ENCODE measurements at regions of chr6 and their contacts with region 1.

Region 1: DNA sequence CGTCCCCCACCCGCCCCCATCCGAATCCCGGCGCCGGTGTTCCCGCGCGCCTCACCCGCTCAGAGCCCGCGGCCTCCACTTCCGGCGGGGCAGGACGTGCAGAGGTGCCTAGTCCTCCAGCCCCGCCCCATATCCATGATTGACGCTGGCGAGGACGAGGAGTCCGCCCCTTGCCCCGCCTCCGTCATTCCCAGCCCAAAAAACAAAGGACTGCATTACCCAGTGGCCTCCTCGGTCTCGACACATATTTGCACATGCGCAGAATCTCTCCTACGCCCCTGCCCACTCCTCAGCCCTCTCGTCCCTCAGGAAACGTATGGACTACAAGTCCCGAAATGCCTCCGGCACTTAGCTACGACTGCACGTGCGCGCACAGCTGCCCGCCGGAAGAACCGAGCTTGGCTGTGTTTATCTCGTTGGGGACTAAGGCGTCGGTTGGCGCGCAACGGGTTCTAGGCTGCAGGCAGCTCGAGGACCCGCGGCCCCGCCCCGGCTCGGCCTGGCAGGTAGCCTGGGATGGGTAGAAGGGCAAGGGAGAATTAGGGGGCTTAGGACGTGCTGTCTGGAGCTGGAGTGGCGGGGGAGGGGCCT is at the starts of genes KLHDC3 and MEA1:
- DNase-seq: peak; percentile 99
- ATAC-seq: peak; percentile 96
- H3K4me3 Mint-ChIP-seq: peak within 1 kb of the TSS; percentile 91
- H3K27ac Mint-ChIP-seq: peak within 1 kb of the TSS; percentile 87
- H3K4me1 Mint-ChIP-seq: peaks cover 39% of the 10 kb centered on the region
- H3K27me3 Mint-ChIP-seq: no peaks in the 10 kb centered on the region
- total RNA-seq, gene KLHDC3: 58.3 to 65.2 TPM
- total RNA-seq, gene MEA1: 93.4 to 129 TPM

Region 2: GRCh38 chr6:42217519-42218367 is 796.2 kb before region 1 on chr6 and contains the start of gene MRPS10:
- CTCF ChIA-PET with region 1: no interaction called
- POLR2A ChIA-PET with region 1: no interaction called
- intact Hi-C with region 1: loop called in 1 of 2 experiments (anchors 2 kb)
- DNase-seq: peak; percentile 95
- ATAC-seq: peak; percentile 99
- H3K4me3 Mint-ChIP-seq: peak within 1 kb of the TSS; percentile 100
- H3K27ac Mint-ChIP-seq: peak within 1 kb of the TSS; percentile 95
- H3K4me1 Mint-ChIP-seq: peaks cover 32% of the 10 kb centered on the region
- H3K27me3 Mint-ChIP-seq: no peaks in the 10 kb centered on the region
- total RNA-seq, gene MRPS10: 35.2 to 36.2 TPM

Region 3: DNA sequence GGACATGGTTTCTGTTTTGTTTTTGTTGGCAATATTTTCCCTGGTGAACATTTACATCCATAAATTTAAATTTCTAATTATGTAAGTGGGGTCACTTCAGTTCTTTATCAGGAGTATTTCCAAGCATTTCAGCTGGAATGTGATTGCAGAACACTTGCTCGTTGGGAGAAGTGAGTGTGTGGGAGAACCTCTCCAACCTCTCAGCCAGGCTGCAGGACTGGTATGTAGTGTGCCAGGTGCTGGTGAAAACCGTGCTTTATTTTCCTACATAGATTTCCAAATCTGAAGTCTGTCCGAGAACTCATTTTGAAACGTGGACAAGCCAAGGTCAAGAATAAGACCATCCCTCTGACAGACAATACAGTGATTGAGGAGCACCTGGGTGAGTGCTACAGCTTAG is 128.2 kb before region 1 on chr6:
- CTCF ChIA-PET with region 1: no interaction called
- POLR2A ChIA-PET with region 1: no interaction called
- intact Hi-C with region 1: no loop called
- DNase-seq: no peak
- ATAC-seq: no peak
- H3K4me3 Mint-ChIP-seq: no peak overlapping the region
- H3K27ac Mint-ChIP-seq: peak overlapping the region; percentile 56
- H3K4me1 Mint-ChIP-seq: peaks cover 44% of the 10 kb centered on the region
- H3K27me3 Mint-ChIP-seq: no peaks in the 10 kb centered on the region

Region 4: GRCh38 chr6:42978839-42979522 is 35.0 kb before region 1 on chr6 and contains the start of gene PEX6:
- CTCF ChIA-PET with region 1: interaction called, 4 read pairs
- POLR2A ChIA-PET with region 1: interaction called, 10 read pairs
- intact Hi-C with region 1: loop called (anchors 1 kb)
- DNase-seq: peak; percentile 98
- ATAC-seq: peak; percentile 95
- H3K4me3 Mint-ChIP-seq: peak within 1 kb of the TSS; percentile 89
- H3K27ac Mint-ChIP-seq: peak within 1 kb of the TSS; percentile 95
- H3K4me1 Mint-ChIP-seq: peaks cover 45% of the 10 kb centered on the region
- H3K27me3 Mint-ChIP-seq: no peaks in the 10 kb centered on the region
- total RNA-seq, gene PEX6: 10.7 to 14.6 TPM

Region 5: DNA sequence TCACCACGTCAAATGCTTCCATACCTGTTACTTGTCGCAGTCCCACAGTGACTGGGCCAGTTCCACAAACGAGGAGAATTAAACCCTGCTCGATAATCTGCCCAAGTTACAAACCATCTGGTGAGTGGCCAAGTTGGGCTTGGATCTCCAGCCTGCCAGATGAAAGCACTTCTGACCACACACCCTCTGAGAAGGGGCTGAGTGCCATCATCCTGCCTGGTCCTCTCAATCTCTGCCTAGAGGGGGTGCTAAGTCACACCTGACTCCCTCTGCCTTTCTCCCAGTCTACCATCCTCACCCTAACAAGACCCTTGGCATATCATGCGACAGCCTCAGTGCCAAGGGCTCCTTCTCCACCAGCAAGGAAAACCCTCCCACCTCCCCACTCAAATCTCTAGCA is 23.3 kb after region 1 on chr6:
- CTCF ChIA-PET with region 1: no interaction called
- POLR2A ChIA-PET with region 1: no interaction called
- intact Hi-C with region 1: no loop called
- DNase-seq: no peak
- ATAC-seq: no peak
- H3K4me3 Mint-ChIP-seq: no peak overlapping the region
- H3K27ac Mint-ChIP-seq: no peak overlapping the region
- H3K4me1 Mint-ChIP-seq: peaks cover 3% of the 10 kb centered on the region
- H3K27me3 Mint-ChIP-seq: no peaks in the 10 kb centered on the region

Region 6: DNA sequence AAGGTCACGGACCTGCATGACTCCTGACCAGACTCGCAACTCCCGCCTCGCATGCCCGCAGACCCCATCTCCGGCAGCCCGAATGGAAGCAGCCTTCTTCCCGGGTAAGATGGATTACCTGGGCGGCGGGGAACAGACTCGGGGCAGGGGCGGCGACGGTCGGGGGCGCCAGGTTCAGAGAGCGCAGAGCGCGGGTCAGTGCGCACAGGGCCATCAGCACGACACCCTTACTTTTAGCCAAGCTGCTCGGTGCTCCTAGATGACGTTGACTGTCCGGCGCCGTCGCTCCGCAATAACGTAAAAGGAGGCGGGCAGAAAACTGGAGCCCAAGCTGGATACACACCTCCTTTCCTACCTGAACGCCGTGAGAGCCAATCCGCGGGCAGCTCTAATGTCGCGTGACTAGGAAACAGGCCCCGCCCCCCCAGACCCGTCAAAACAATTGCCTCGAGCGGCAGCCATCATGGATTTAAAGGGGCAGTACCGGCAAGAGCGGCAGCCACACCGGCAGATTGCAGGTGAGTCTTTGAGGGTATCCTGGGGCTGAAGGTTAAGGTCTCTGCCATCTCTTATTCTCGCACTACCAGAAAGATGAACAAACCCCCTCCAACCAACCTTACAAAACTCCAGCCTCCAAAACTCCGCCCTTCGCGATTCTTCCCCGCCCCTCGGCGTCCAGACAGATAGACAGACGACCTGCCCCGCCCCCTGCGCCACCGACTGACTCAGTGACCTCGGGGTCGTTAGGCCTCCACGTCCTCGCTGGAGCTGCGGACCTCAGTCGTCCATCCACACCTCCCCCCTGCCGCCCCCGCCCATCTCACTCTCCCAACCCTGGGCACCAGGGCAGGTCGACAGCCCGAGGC is 45.5 kb after region 1 on chr6 and contains the starts of genes KLC4 and MRPL2:
- CTCF ChIA-PET with region 1: no interaction called
- POLR2A ChIA-PET with region 1: interaction called, 8 read pairs
- intact Hi-C with region 1: loop called (anchors 1 kb)
- DNase-seq: peak; percentile 99
- ATAC-seq: peak; percentile 98
- H3K4me3 Mint-ChIP-seq: peak within 1 kb of the TSS; percentile 85
- H3K27ac Mint-ChIP-seq: peak within 1 kb of the TSS; percentile 94
- H3K4me1 Mint-ChIP-seq: peaks cover 27% of the 10 kb centered on the region
- H3K27me3 Mint-ChIP-seq: no peaks in the 10 kb centered on the region
- total RNA-seq, gene KLC4: 10.0 to 10.1 TPM
- total RNA-seq, gene MRPL2: 93.9 to 110 TPM

Region 7: GRCh38 chr6:43369174-43370022 is 355.5 kb after region 1 on chr6 and contains the start of gene ZNF318:
- CTCF ChIA-PET with region 1: no interaction called
- POLR2A ChIA-PET with region 1: no interaction called
- intact Hi-C with region 1: loop called in 1 of 2 experiments (anchors 1 kb)
- DNase-seq: peak; percentile 97
- ATAC-seq: peak; percentile 97
- H3K4me3 Mint-ChIP-seq: peak within 1 kb of the TSS; percentile 86
- H3K27ac Mint-ChIP-seq: peak within 1 kb of the TSS; percentile 95
- H3K4me1 Mint-ChIP-seq: peaks cover 37% of the 10 kb centered on the region
- H3K27me3 Mint-ChIP-seq: no peaks in the 10 kb centered on the region
- total RNA-seq, gene ZNF318: 11.2 to 12.9 TPM

Region 8: DNA sequence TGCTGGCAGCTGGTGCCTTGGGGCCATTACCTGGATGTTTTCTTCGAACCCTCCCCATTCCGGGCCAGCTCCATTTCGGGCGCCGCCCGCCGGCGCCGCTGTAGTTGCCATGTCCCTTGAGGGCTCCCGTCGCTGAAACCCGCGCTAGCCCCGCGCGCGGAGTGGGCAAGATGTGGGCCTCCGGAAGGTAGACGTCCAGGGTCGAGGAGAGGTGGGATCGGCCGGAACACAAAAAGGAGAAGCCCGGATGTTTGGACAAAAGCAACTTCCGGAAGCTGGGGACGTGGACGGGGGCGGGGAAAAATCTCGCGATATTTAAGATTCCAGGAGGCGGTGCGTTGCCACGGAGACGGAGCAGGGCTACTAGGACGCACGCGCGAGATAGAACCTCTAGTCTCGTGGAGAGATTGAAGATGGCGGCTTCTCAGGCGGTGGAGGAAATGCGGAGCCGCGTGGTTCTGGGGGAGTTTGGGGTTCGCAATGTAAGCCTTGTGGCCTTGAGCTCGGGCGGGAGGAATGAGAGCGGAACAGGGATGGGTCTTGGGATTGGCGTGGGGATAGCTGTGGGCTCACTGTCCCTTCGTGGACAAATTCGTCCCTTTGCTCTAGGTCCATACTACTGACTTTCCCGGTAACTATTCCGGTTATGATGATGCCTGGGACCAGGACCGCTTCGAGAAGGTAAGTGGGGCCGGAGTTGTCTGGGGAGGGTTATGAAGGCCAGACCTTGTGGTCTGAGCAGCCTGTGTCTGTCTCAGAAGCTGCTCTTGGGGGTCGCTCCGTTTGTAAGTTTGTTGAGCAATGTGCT is 503.0 kb after region 1 on chr6 and contains the starts of genes POLR1C and YIPF3:
- CTCF ChIA-PET with region 1: no interaction called
- POLR2A ChIA-PET with region 1: interaction called, 3 read pairs
- intact Hi-C with region 1: loop called in 1 of 2 experiments (anchors 2 kb)
- DNase-seq: peak; percentile 98
- ATAC-seq: peak; percentile 93
- H3K4me3 Mint-ChIP-seq: no peak within 1 kb of the TSS
- H3K27ac Mint-ChIP-seq: no peak within 1 kb of the TSS
- H3K4me1 Mint-ChIP-seq: peaks cover 32% of the 10 kb centered on the region
- H3K27me3 Mint-ChIP-seq: no peaks in the 10 kb centered on the region
- total RNA-seq, gene POLR1C: 43.4 to 52.9 TPM
- total RNA-seq, gene YIPF3: 38.0 to 39.6 TPM